ENCODE measurements at regions of chr9 and their contacts with region 1.

Region 1: GRCh38 chr9:128420060-128420650 is 502 bp upstream of the CERCAM start:
- DNase-seq: peak in 1 of 2 donors; percentile 33
- ATAC-seq: peak; percentile 87 to 88
- H3K4me3 ChIP-seq: peak overlapping the region; percentile 60 to 99 (median 73)
- H3K27ac ChIP-seq: peak overlapping the region; percentile 29 to 73 (median 50)
- H3K4me1 ChIP-seq: peaks cover 5 to 18% of the 10 kb centered on the region in 2 donors
- H3K27me3 ChIP-seq: peaks cover 12 to 17% (median 14%) of the 10 kb centered on the region in 3 donors
- CTCF ChIP-seq: peak; percentile 46 to 83 (median 68)
- POLR2A ChIP-seq: no peak

Region 2: GRCh38 chr9:128361986-128362646 is 58.0 kb before region 1 on chr9:
- in situ Hi-C with region 1: loop called in 1 of 4 experiments (anchors 10 kb)
- intact Hi-C with region 1: loop called (anchors 2 kb)
- DNase-seq: peak; percentile 72 to 80
- ATAC-seq: peak; percentile 96 to 98
- H3K4me3 ChIP-seq: peak overlapping the region; percentile 42 to 53 (median 47)
- H3K27ac ChIP-seq: peak overlapping the region; percentile 19 to 57 (median 46)
- H3K4me1 ChIP-seq: peaks cover 15 to 19% of the 10 kb centered on the region in 2 donors
- H3K27me3 ChIP-seq: no peaks in the 10 kb centered on the region
- CTCF ChIP-seq: peak; percentile 79 to 87 (median 85)
- POLR2A ChIP-seq: no peak

Region 3: GRCh38 chr9:128643519-128644300 is 223.6 kb after region 1 on chr9:
- in situ Hi-C with region 1: no loop called
- intact Hi-C with region 1: no loop called
- DNase-seq: no peak
- ATAC-seq: no peak
- H3K4me3 ChIP-seq: no peak overlapping the region
- H3K27ac ChIP-seq: no peak overlapping the region
- H3K4me1 ChIP-seq: no peaks in the 10 kb centered on the region
- H3K27me3 ChIP-seq: no peaks in the 10 kb centered on the region
- CTCF ChIP-seq: no peak
- POLR2A ChIP-seq: no peak